ENCODE measurements at regions of chr1 and their contacts with region 1.

Region 1: GRCh38 chr1:15668089-15668754 is 15.9 kb upstream of the PLEKHM2 start:
- DNase-seq: no peak
- ATAC-seq: no peak
- H3K4me3 ChIP-seq: no peak overlapping the region
- H3K4me3 Mint-ChIP-seq: no peak overlapping the region
- H3K27ac ChIP-seq: no peak overlapping the region
- H3K27ac Mint-ChIP-seq: no peak overlapping the region
- H3K4me1 ChIP-seq: no peaks in the 10 kb centered on the region
- H3K4me1 Mint-ChIP-seq: peaks cover 0 to 5% (median 0%) of the 10 kb centered on the region in 3 donors
- H3K27me3 ChIP-seq: no peaks in the 10 kb centered on the region
- H3K27me3 Mint-ChIP-seq: no peaks in the 10 kb centered on the region

Region 2: DNA sequence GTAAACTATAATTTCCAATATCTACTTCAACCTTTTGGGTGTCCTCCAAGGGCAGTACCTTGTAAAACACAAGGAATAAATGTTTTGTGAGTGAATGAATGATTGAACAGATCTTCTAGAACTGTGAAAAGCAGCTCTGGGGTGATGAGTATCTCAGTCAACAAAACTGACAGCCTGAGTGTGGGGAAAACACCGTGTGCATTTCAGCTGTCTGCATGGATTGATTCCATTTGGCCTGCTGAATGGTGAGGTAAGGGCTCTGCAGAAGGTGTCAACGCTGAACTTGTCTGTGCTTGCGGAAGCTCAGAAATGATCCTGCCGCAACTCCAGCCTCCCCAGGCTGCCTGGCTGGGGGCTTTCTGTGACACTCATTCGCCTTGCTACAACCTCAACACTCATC is 75.9 kb before region 1 on chr1:
- CTCF ChIA-PET with region 1: interaction called in 1 of 2 experiments, 3 read pairs
- POLR2A ChIA-PET with region 1: interaction called in 1 of 2 experiments, 10 read pairs
- DNase-seq: no peak
- ATAC-seq: no peak
- H3K4me3 ChIP-seq: no peak overlapping the region
- H3K4me3 Mint-ChIP-seq: no peak overlapping the region
- H3K27ac ChIP-seq: no peak overlapping the region
- H3K27ac Mint-ChIP-seq: no peak overlapping the region
- H3K4me1 ChIP-seq: no peaks in the 10 kb centered on the region
- H3K4me1 Mint-ChIP-seq: peaks cover 0 to 3% (median 2%) of the 10 kb centered on the region in 3 donors
- H3K27me3 ChIP-seq: peaks cover 3% of the 10 kb centered on the region in 2 experiments
- H3K27me3 Mint-ChIP-seq: no peaks in the 10 kb centered on the region

Region 3: DNA sequence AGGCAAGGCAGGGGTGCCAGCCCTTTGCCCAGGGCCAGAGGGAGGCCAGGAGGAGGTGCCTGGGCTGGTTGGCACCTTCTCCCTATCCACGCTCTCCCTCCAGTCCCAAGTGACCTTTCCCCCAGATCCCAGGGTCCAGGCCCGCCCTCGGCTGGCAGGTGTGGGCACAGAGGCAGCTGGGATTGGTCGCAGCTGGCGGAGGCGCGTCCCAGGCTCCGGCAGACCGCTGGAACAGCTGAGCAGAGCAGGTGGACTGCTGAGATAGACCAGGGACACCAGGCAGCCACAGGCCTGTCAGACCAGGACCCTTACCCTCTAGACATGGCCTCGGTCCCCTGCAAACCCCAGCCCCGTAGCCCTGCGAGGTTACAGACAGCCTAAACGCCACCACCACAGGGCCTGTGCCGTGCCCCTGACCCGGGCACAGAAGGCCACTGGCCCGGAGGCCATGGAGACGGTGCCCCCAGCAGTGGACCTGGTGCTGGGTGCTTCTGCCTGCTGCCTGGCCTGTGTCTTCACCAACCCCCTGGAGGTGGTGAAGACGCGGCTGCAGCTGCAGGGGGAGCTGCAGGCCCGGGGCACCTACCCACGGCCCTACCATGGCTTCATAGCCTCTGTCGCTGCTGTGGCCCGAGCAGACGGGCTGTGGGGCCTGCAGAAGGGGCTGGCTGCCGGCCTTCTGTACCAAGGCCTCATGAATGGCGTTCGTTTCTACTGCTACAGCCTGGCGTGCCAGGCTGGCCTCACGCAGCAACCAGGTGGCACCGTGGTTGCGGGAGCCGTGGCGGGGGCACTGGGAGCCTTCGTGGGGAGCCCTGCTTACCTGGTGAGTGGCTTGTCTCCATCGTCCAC is 68.0 kb after region 1 on chr1 and contains the start of gene SLC25A34:
- CTCF ChIA-PET with region 1: no interaction called
- POLR2A ChIA-PET with region 1: no interaction called
- DNase-seq: no peak
- ATAC-seq: no peak
- H3K4me3 ChIP-seq: no peak within 1 kb of the TSS
- H3K4me3 Mint-ChIP-seq: no peak within 1 kb of the TSS
- H3K27ac ChIP-seq: no peak within 1 kb of the TSS
- H3K27ac Mint-ChIP-seq: no peak within 1 kb of the TSS
- H3K4me1 ChIP-seq: peaks cover 0 to 1% of the 10 kb centered on the region in 2 experiments
- H3K4me1 Mint-ChIP-seq: peaks cover under 1 to 3% (median 2%) of the 10 kb centered on the region in 3 donors
- H3K27me3 ChIP-seq: no peaks in the 10 kb centered on the region
- H3K27me3 Mint-ChIP-seq: no peaks in the 10 kb centered on the region
- total RNA-seq, gene SLC25A34: 1.8 to 4.1 (median 2.6) TPM